Breast epithelium (tissue), 4 donors: ENCODE measurements at regions of chr3 and their contacts with region 1.

Region 1: GRCh38 chr3:134212906-134213665 is 37.6 kb downstream of the RYK start:
- DNase-seq: peak; percentile 76 to 89
- H3K4me3 ChIP-seq: no peak overlapping the region
- H3K27ac ChIP-seq: peak overlapping the region in 1 of 2 donors; percentile 42
- H3K4me1 ChIP-seq: no peaks in the 10 kb centered on the region
- H3K27me3 ChIP-seq: no peaks in the 10 kb centered on the region
- CTCF ChIP-seq: peak; percentile 91 to 95 (median 94)
- POLR2A ChIP-seq: no peak

Region 2: DNA sequence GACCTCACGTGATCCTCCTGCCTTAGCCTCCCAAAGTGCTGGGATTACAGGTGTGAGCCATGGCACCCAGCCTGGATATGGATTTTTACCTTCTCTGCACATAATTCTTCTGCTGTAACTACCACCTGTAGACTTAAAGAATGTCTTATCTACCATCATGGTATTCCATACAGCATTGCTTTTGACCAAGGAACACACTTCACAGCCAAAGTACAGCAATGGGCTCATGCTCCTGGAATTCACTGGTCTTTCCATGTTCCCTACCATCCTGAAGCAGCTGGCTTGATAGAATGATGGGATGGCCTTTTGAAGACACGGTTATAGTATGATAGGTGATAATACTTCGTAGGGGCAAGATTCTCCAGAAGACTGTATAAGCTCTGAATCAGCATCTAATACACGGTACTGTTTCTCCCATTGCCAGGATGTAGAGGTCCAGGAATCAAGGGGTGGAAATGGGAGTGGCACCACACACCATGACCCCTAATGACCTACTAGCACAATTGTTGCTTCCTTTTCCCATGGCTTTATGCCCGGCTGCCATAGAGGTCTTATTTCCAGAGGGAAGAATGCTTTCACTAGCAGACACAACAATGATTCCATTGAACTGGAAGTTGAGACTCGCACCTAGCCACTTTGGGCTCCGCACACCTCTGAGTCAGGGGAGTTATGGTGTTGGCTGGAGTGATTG is 700.5 kb before region 1 on chr3:
- intact Hi-C with region 1: loop called (anchors 5 kb)
- DNase-seq: no peak
- H3K4me3 ChIP-seq: no peak overlapping the region
- H3K27ac ChIP-seq: no peak overlapping the region
- H3K4me1 ChIP-seq: no peaks in the 10 kb centered on the region
- H3K27me3 ChIP-seq: no peaks in the 10 kb centered on the region
- CTCF ChIP-seq: no peak
- POLR2A ChIP-seq: no peak

Region 3: GRCh38 chr3:134228035-134228434 is 14.9 kb after region 1 on chr3:
- intact Hi-C with region 1: no loop called
- DNase-seq: no peak
- H3K4me3 ChIP-seq: no peak overlapping the region
- H3K27ac ChIP-seq: no peak overlapping the region
- H3K4me1 ChIP-seq: no peaks in the 10 kb centered on the region
- H3K27me3 ChIP-seq: no peaks in the 10 kb centered on the region
- CTCF ChIP-seq: no peak
- POLR2A ChIP-seq: no peak

Region 4: DNA sequence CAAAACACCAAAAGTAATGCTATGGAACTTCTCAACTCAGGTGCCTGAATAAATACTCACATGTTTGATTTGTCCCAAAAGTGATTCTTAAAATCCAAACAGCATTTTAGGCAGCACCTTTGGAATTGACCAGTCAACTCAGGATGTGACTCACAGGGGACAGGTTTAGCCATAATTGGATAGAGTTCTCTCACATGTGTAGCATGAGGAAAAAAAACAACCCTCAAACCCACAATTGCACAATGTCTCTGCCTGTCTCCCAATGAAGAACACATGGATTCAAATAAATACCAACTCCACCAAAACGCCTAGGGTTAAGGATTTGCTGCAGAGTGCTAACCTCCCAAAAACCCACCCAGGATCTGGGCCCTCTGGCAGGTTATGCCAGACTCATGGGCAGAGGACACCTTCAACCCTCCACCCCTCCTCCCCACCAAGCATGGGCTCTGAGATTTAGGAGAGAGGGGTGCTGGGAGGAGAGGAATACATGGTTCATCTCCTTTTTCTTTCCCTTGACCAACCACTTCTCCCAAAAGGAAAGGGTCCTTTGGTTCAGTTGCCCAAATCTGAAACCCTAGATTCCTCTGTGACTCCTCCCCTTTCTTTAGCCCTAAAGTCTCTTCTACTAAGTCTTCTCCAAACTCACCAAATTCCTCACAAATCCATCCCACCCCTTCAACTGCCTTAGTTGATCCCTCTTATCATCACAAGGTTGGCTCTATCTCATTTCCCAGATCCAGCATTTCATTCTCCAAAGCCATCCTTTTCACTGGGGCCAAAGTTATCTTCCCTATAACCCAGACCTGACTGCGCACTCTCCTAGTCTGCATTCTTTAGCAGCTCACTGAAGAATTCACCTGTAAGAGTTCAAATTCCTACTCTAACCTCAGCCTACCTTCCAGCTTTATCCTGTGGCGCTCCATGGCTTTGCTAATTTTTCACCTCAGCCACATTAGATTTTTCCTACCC is 29.8 kb after region 1 on chr3:
- intact Hi-C with region 1: loop called (anchors 2 kb)
- DNase-seq: no peak
- H3K4me3 ChIP-seq: no peak overlapping the region
- H3K27ac ChIP-seq: peak overlapping the region; percentile 81 to 85
- H3K4me1 ChIP-seq: peaks cover 0 to 11% of the 10 kb centered on the region in 2 donors
- H3K27me3 ChIP-seq: no peaks in the 10 kb centered on the region
- CTCF ChIP-seq: no peak
- POLR2A ChIP-seq: no peak